Activated naive CD4-positive, alpha-beta T cell treated with anti-CD3 and anti-CD28 coated beads for 36 hours (primary cell): ENCODE measurements at regions of chr1 and their contacts with region 1.

Region 1: GRCh38 chr1:44721485-44722361 is 9.2 kb downstream of the RNU5D-1 start:
- DNase-seq: peak; percentile 90
- H3K4me3 Mint-ChIP-seq: peak overlapping the region; percentile 66
- H3K27ac Mint-ChIP-seq: peak overlapping the region; percentile 98
- H3K4me1 Mint-ChIP-seq: peaks cover 83% of the 10 kb centered on the region
- H3K27me3 Mint-ChIP-seq: no peaks in the 10 kb centered on the region

Region 2: GRCh38 chr1:44553771-44554170 is 168.0 kb before region 1 on chr1:
- CTCF ChIA-PET with region 1: no interaction called
- intact Hi-C with region 1: no loop called
- DNase-seq: no peak
- H3K4me3 Mint-ChIP-seq: no peak overlapping the region
- H3K27ac Mint-ChIP-seq: no peak overlapping the region
- H3K4me1 Mint-ChIP-seq: no peaks in the 10 kb centered on the region
- H3K27me3 Mint-ChIP-seq: no peaks in the 10 kb centered on the region

Region 3: GRCh38 chr1:44807262-44808062 is 85.7 kb after region 1 on chr1 and contains the start of gene DYNLT4:
- CTCF ChIA-PET with region 1: interaction called, 3 read pairs
- intact Hi-C with region 1: loop called (anchors 1 kb)
- DNase-seq: peak; percentile 97
- H3K4me3 Mint-ChIP-seq: peak within 1 kb of the TSS; percentile 76
- H3K27ac Mint-ChIP-seq: peak within 1 kb of the TSS; percentile 100
- H3K4me1 Mint-ChIP-seq: peaks cover 93% of the 10 kb centered on the region
- H3K27me3 Mint-ChIP-seq: no peaks in the 10 kb centered on the region
- total RNA-seq, gene DYNLT4: 0.62 to 0.67 TPM

Region 4: DNA sequence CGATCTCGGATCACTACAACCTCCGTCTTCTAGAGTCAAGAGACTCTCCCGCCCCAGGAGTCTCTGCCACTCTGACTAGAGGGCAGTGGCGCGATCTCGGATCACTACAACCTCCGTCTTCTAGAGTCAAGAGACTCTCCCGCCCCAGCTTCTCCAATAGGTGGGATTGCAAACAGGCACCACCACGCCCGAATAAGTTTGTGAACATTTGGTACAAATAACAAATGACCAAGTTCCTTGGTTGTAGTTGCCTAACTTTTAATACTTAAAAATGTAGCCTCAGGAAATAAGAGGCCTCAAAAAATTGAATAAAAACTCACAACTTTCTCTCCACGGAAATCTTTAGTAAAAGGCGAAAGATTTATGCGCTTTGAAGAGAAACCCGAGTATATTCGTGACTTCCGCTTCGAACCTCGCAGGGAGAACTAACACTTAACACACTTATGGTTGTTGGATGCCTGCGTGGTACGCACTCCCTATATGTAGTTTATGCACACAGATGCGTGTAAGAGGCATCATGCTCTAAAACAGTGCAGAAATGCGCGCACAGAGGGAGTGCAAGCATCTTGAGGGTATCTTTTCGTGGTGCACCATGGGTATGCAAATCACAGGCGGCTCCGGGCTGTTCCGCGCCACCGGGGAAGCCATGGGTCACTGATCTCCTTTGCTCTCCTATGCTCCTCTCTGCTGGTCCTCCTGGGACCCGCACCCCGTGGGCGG is 98.0 kb after region 1 on chr1:
- CTCF ChIA-PET with region 1: interaction called, 3 read pairs
- intact Hi-C with region 1: loop called (anchors 1 kb)
- DNase-seq: peak; percentile 86
- H3K4me3 Mint-ChIP-seq: peak overlapping the region; percentile 88
- H3K27ac Mint-ChIP-seq: peak overlapping the region; percentile 99
- H3K4me1 Mint-ChIP-seq: peaks cover 34% of the 10 kb centered on the region
- H3K27me3 Mint-ChIP-seq: no peaks in the 10 kb centered on the region

Region 5: DNA sequence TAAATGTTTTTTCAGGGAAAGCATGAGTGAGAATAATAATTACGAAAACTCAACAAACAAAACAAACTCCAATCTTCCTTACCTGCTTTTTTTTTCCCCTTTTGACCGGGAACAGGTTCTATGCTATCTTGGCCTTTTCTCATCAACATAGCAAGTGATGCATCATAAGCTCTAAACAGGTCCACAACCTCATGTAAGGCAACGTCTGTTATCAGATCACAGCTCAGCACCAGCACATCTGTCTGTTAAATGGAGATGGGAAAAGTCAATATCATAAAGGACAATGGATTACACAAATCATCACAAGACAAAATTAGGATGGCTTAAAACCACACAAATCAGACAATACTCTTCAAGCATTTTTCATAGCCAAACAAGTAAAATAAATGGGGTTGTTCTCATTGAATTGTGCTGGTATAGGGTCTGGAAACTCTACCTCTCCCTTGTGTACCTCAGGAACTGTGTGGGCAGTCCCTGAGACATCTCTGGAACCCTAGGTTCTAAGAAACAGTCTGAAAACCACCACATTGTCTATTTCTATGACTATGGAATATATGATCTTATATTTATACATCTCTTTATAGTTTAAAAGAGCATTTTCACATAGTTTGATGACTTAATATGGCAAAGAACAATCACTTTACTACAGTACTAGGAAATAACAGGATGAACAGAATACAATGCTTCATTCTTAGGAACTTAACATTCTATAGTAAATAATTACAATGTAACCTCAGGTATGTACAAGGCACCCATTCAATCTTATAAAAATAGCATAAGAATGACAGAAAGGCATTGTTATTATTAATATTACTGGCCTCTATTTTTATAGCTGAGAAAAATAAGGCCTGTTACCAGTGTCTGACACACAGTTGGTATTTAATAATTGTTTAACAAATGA is 220.0 kb after region 1 on chr1:
- CTCF ChIA-PET with region 1: no interaction called
- intact Hi-C with region 1: no loop called
- DNase-seq: no peak
- H3K4me3 Mint-ChIP-seq: no peak overlapping the region
- H3K27ac Mint-ChIP-seq: no peak overlapping the region
- H3K4me1 Mint-ChIP-seq: peaks cover 4% of the 10 kb centered on the region
- H3K27me3 Mint-ChIP-seq: no peaks in the 10 kb centered on the region